HEK293 (cell line): ENCODE measurements at regions of chr11 and their contacts with region 1.

Region 1: GRCh38 chr11:43852057-43852636 is 28.5 kb upstream of the ALKBH3 start:
- H3K4me3 ChIP-seq: no peak overlapping the region
- H3K27ac ChIP-seq: no peak overlapping the region
- H3K4me1 ChIP-seq: no peaks in the 10 kb centered on the region
- CTCF ChIP-seq: no peak

Region 2: GRCh38 chr11:43434893-43435292 is 417.3 kb before region 1 on chr11:
- CTCF ChIA-PET with region 1: no interaction called
- POLR2A ChIA-PET with region 1: no interaction called
- H3K4me3 ChIP-seq: no peak overlapping the region
- H3K27ac ChIP-seq: no peak overlapping the region
- H3K4me1 ChIP-seq: no peaks in the 10 kb centered on the region
- CTCF ChIP-seq: no peak

Region 3: GRCh38 chr11:43567396-43567975 is 284.7 kb before region 1 on chr11:
- CTCF ChIA-PET with region 1: interaction called, 38 read pairs
- POLR2A ChIA-PET with region 1: no interaction called
- H3K4me3 ChIP-seq: no peak overlapping the region
- H3K27ac ChIP-seq: no peak overlapping the region
- H3K4me1 ChIP-seq: no peaks in the 10 kb centered on the region
- CTCF ChIP-seq: no peak

Region 4: DNA sequence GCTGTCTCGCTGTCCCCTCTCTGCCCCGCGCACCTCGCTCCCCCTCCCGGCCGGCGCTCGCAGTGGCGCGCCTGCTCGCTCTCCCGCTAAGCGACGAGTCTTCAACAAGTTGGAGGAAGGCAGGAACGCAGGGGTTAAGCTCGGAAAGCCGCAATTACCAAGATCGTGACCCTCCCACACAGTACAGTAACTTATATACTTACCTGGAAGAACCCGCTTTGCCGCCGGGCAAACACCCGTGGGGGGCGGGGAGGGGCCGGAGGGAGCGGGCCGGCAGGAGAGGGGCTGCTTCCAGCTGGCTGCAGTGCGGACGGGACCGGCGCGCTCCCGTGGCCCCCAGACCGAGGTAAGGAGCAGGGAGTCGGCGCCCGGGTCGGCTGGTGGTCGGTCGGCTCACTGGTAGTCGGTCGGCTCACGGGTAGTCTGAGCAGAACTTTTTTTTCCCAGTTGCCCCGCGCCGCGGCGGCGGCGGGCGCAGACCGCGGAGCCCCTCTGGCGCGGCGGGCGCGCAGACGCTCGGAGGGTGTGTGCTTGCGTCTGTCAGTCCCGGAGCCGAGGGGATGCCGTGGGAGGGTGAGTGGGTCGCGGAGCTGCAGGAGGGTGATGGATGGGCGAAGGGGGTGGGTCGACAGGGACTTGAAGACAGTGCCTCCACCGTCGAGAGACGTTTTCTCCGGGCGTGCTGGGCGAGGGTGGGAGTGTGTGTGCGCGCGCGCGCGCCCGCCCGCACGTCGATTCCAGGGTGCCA is 272.8 kb before region 1 on chr11:
- CTCF ChIA-PET with region 1: interaction called, 38 read pairs
- POLR2A ChIA-PET with region 1: no interaction called
- H3K4me3 ChIP-seq: peak overlapping the region; percentile 51
- H3K27ac ChIP-seq: no peak overlapping the region
- H3K4me1 ChIP-seq: peaks cover 3% of the 10 kb centered on the region; the same call in 1 of the 2 replicates
- CTCF ChIP-seq: no peak

Region 5: DNA sequence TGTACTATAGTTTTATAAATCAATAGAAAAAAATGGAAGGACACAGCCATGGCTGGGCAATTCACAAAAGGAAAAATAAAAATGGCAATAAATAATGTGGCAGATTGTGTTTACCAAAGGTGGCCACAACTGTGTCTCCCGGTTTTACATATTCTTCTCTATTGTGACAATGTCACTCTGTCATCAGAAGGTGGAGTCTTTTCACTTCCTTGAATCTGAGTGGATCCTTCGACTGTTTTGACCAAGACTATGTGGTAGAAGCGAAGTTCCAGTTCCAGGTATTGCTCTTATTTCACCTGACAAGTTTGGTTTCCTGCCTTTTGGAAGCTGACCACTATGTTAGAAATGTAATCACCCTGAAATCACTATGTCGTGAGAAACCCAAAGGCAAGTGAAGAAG is 202.6 kb before region 1 on chr11:
- CTCF ChIA-PET with region 1: no interaction called
- POLR2A ChIA-PET with region 1: no interaction called
- H3K4me3 ChIP-seq: no peak overlapping the region
- H3K27ac ChIP-seq: no peak overlapping the region
- H3K4me1 ChIP-seq: no peaks in the 10 kb centered on the region
- CTCF ChIP-seq: no peak

Region 6: DNA sequence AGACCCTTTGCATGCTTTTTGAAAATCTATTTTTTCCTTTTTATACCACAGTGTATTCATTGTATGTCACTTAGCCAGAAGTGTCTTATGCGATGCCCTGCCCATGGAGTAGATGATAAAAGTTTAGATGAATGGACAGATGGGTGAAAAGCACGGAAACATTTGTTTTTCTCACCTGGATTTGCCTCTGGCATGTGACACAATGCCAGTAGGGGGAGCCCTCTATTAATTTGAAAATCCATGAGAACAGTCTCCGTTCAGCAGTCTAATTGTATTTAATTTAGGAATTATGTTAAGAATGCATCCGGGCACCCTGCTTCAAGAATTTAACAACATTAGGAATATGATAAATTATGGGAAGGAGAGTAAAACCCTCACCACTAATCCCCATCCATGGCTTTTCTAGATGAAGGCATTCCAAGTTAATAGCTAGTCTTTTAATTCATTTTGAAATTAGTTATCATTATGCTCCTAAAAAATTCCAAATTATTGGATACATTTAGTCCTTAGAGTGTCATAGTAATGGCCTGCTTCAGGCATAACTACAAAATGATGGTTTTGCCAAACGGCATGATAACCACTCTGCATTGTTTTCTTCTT is 26.8 kb before region 1 on chr11:
- CTCF ChIA-PET with region 1: interaction called, 122 read pairs
- POLR2A ChIA-PET with region 1: no interaction called
- H3K4me3 ChIP-seq: no peak overlapping the region
- H3K27ac ChIP-seq: no peak overlapping the region
- H3K4me1 ChIP-seq: no peaks in the 10 kb centered on the region
- CTCF ChIP-seq: no peak

Region 7: DNA sequence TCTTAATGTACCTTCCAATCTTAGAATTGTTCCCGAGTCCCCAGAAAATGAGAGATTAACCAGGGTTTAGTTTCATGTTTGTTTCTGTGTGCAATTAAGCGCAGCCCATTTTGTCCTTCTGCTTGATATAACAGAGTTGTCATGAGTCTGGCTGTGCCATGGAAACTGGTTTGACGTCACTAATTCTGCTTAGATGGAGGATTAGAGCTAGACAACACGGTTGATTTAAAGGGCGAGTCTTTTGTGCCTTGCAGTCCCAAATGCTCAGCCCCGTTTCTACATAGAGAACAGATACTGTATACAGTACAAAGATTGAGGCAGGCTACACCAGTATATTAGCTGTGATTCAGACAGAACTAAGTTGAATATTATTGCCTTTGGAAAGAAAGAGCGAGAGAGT is 17.0 kb before region 1 on chr11:
- CTCF ChIA-PET with region 1: interaction called, 122 read pairs
- POLR2A ChIA-PET with region 1: interaction called, 3 read pairs
- H3K4me3 ChIP-seq: no peak overlapping the region
- H3K27ac ChIP-seq: no peak overlapping the region
- H3K4me1 ChIP-seq: peaks cover 6% of the 10 kb centered on the region
- CTCF ChIP-seq: no peak